ENCODE measurements at regions of chr9 and their contacts with region 1.

Region 1: GRCh38 chr9:4750023-4750673 is 9.1 kb upstream of the AK3 start:
- DNase-seq: peak in 1 of 2 experiments; percentile 42
- H3K4me3 ChIP-seq: no peak overlapping the region
- H3K4me1 ChIP-seq: peaks cover 6% of the 10 kb centered on the region; the same call in 1 of the 2 replicates
- H3K27me3 ChIP-seq: no peaks in the 10 kb centered on the region

Region 2: DNA sequence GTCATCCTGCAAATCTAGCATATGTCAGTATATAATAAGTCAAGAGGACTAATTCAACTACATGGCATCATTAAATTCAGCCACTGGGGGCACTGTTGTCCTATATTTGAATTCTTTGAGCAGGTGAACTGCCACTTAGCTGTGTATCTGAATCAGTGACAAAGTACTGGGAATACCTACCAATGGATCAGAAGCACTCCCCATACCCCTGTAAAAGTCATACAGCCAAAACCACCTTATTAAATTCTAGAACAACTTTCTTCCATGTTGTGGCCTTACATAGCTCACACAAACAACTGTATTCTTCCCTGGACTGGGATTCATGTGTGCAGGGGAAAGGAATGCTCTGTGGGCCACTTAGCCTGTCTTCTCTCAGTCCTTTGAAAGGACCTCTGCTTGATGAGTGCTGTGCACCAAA is 145.5 kb before region 1 on chr9:
- in situ Hi-C with region 1: no loop called
- DNase-seq: peak; percentile 75 to 90
- H3K4me3 ChIP-seq: no peak overlapping the region
- H3K4me1 ChIP-seq: peaks cover 13% of the 10 kb centered on the region
- H3K27me3 ChIP-seq: no peaks in the 10 kb centered on the region

Region 3: GRCh38 chr9:5593904-5594303 is 843.8 kb after region 1 on chr9:
- in situ Hi-C with region 1: loop called (anchors 10 kb)
- DNase-seq: no peak
- H3K4me3 ChIP-seq: no peak overlapping the region
- H3K4me1 ChIP-seq: no peaks in the 10 kb centered on the region
- H3K27me3 ChIP-seq: no peaks in the 10 kb centered on the region

Measured in HAP-1 (cell line).